ENCODE measurements at regions of chr20 and their contacts with region 1.

Region 1: GRCh38 chr20:50509935-50510705 is at the start of gene PTPN1:
- DNase-seq: peak; percentile 99
- H3K4me3 ChIP-seq: peak within 1 kb of the TSS; percentile 86 to 91 (median 90)
- H3K27ac ChIP-seq: peak within 1 kb of the TSS; percentile 94
- H3K4me1 ChIP-seq: peaks cover 26% of the 10 kb centered on the region
- H3K27me3 ChIP-seq: no peaks in the 10 kb centered on the region
- CTCF ChIP-seq: peak; percentile 15 to 36
- total RNA-seq, gene PTPN1: 43.5 to 90.8 TPM

Region 2: GRCh38 chr20:50120897-50121693 is 389.0 kb before region 1 on chr20:
- CTCF ChIA-PET with region 1: no interaction called
- dilution Hi-C with region 1: no loop called
- in situ Hi-C with region 1: no loop called
- intact Hi-C with region 1: no loop called
- DNase-seq: no peak
- H3K4me3 ChIP-seq: no peak overlapping the region
- H3K27ac ChIP-seq: no peak overlapping the region
- H3K4me1 ChIP-seq: peaks cover 4% of the 10 kb centered on the region
- H3K27me3 ChIP-seq: no peaks in the 10 kb centered on the region
- CTCF ChIP-seq: peak; percentile 96 to 99

Region 3: GRCh38 chr20:50434653-50435396 is 75.3 kb before region 1 on chr20:
- CTCF ChIA-PET with region 1: no interaction called
- dilution Hi-C with region 1: no loop called
- in situ Hi-C with region 1: no loop called
- intact Hi-C with region 1: no loop called
- DNase-seq: peak; percentile 93
- H3K4me3 ChIP-seq: no peak overlapping the region
- H3K27ac ChIP-seq: peak overlapping the region; percentile 49
- H3K4me1 ChIP-seq: peaks cover 38% of the 10 kb centered on the region
- H3K27me3 ChIP-seq: no peaks in the 10 kb centered on the region
- CTCF ChIP-seq: no peak

Region 4: DNA sequence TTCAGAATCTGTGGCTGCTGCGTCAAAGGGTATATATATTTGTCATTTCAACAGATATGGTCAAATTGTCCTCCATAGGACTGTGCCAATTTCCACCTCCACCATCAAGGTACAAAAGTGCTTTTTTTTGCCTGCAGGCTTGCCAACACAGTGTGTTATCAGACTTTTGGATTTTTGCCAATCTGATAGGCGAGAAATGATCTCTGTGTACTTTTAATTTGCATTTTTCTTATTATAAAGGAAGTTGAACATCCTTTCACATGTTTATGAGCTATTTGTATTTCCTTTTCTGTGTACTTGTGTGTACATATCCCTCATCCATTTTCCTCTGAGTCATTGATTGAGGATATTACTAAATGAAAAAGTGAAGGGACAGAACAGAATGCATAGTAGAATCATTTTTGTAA is 38.9 kb before region 1 on chr20:
- CTCF ChIA-PET with region 1: no interaction called
- dilution Hi-C with region 1: no loop called
- in situ Hi-C with region 1: loop called in 1 of 2 experiments (anchors 5 kb)
- intact Hi-C with region 1: no loop called
- DNase-seq: no peak
- H3K4me3 ChIP-seq: no peak overlapping the region
- H3K27ac ChIP-seq: no peak overlapping the region
- H3K4me1 ChIP-seq: peaks cover 17% of the 10 kb centered on the region
- H3K27me3 ChIP-seq: no peaks in the 10 kb centered on the region
- CTCF ChIP-seq: no peak

Region 5: GRCh38 chr20:50491926-50492634 is 18.0 kb before region 1 on chr20:
- CTCF ChIA-PET with region 1: no interaction called
- dilution Hi-C with region 1: no loop called
- in situ Hi-C with region 1: no loop called
- intact Hi-C with region 1: loop called (anchors 1 kb)
- DNase-seq: peak; percentile 42
- H3K4me3 ChIP-seq: no peak overlapping the region
- H3K27ac ChIP-seq: peak overlapping the region; percentile 4
- H3K4me1 ChIP-seq: peaks cover 38% of the 10 kb centered on the region
- H3K27me3 ChIP-seq: no peaks in the 10 kb centered on the region
- CTCF ChIP-seq: no peak

Region 6: DNA sequence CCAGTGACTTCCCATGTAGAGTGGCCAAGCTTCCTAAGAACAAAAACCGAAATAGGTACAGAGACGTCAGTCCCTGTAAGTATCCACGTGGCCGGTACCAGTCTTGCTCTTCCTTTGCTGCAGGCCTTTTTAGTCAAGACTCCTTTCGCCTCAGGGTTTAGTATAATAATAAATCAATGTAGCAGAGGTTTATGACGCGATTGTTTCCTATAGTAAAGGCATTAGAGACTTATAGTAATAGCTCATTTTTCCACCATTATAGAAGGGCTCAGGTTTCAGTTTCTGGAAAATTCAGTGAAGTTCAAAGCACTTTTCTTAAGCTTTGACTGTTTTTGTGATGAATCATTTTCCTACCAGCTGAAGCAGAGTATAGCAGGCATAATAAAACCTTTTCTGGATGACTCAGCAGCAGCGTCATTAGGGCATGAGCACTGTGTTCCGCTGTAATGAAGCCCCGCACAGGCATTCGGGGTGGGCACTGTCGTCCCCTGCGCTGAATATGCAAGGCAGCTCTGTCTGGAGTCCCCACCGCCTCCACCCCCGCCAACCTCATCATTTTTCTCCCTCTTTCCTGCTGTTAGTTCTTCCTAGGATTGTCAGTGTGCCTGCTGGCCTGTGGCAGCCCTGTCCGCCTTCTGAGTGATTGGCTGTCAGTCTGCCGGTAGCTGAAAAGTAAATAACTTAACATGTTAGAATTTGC is 51.4 kb after region 1 on chr20:
- CTCF ChIA-PET with region 1: no interaction called
- dilution Hi-C with region 1: no loop called
- in situ Hi-C with region 1: no loop called
- intact Hi-C with region 1: loop called (anchors 2 kb)
- DNase-seq: peak; percentile 85
- H3K4me3 ChIP-seq: no peak overlapping the region
- H3K27ac ChIP-seq: peak overlapping the region; percentile 78
- H3K4me1 ChIP-seq: peaks cover 38% of the 10 kb centered on the region
- H3K27me3 ChIP-seq: no peaks in the 10 kb centered on the region
- CTCF ChIP-seq: no peak

Region 7: GRCh38 chr20:50575847-50576720 is 66.0 kb after region 1 on chr20:
- CTCF ChIA-PET with region 1: no interaction called
- dilution Hi-C with region 1: no loop called
- in situ Hi-C with region 1: no loop called
- intact Hi-C with region 1: loop called (anchors 5 kb)
- DNase-seq: no peak
- H3K4me3 ChIP-seq: no peak overlapping the region
- H3K27ac ChIP-seq: no peak overlapping the region
- H3K4me1 ChIP-seq: no peaks in the 10 kb centered on the region
- H3K27me3 ChIP-seq: no peaks in the 10 kb centered on the region
- CTCF ChIP-seq: peak; percentile 57 to 75

Region 8: GRCh38 chr20:50731055-50731871 is 221.1 kb after region 1 on chr20 and contains the start of gene PARD6B:
- CTCF ChIA-PET with region 1: no interaction called
- dilution Hi-C with region 1: loop called (anchors 5 kb)
- in situ Hi-C with region 1: no loop called
- intact Hi-C with region 1: no loop called
- DNase-seq: peak; percentile 100
- H3K4me3 ChIP-seq: peak within 1 kb of the TSS; percentile 60 to 88 (median 78)
- H3K27ac ChIP-seq: peak within 1 kb of the TSS; percentile 88
- H3K4me1 ChIP-seq: peaks cover 53% of the 10 kb centered on the region
- H3K27me3 ChIP-seq: no peaks in the 10 kb centered on the region
- CTCF ChIP-seq: no peak
- total RNA-seq, gene PARD6B: 5.6 to 7.7 TPM

Measured in mammary epithelial cell (primary cell).